Activated CD4-positive, alpha-beta T cell treated with anti-CD3 and anti-CD28 coated beads, Interleukin-2, amount 10 ng/mL, durations not matched to agents 24 days and 14 days (primary cell): ENCODE measurements at regions of chr11 and their contacts with region 1.

Region 1: GRCh38 chr11:9265211-9266131 is at the start of gene DENND5A:
- DNase-seq: peak; percentile 85
- H3K4me3 Mint-ChIP-seq: peak within 1 kb of the TSS; percentile 84
- H3K27ac Mint-ChIP-seq: peak within 1 kb of the TSS; percentile 89
- H3K4me1 Mint-ChIP-seq: peaks cover 32% of the 10 kb centered on the region
- H3K27me3 Mint-ChIP-seq: peaks cover 29% of the 10 kb centered on the region
- total RNA-seq, gene DENND5A: 59.9 and 60.7 TPM in 2 replicates

Region 2: DNA sequence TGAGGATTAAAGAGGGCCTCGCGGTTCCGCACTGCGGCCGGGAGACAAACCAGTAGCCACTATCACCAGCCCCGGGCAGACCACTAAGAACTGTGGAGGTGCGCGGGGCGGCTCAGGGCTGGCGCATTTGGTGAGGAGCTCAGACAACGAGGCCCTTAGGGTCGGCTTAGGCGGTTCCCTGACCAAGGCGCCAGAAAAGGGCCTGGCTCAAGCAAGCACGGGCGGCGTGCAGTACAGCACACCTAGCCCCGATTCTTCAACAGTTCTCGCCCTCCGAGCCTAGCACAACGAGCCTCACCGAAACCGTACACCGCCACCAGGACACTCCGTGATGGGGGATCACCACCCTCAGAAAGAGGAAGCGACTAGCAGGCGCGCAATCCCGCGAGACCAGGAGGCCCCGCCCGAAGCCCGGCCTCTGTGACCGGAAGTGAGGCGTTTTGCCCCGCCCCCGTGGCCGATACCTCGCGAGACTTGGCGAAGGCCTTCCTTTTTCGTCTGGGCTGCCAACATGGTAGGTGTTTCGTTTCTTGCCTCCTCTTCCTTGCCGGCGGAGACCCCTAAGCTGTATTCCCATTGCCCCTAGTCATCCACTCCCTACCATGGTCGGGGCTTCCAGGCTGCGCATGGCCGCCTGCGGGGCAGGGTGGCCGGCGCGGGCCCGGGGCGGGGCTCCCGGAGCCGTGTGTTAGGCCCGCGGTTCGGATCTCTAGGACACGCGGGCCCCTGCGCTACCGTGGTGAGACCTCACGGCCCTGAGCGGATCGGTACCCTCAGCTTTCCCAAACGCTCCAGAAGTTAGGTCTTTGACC is 583.0 kb before region 1 on chr11 and contains the starts of genes RPL27A and TRIM66:
- intact Hi-C with region 1: loop called (anchors 1 kb)
- DNase-seq: peak; percentile 100
- H3K4me3 Mint-ChIP-seq: peak within 1 kb of the TSS; percentile 97
- H3K27ac Mint-ChIP-seq: peak within 1 kb of the TSS; percentile 95
- H3K4me1 Mint-ChIP-seq: peaks cover 30% of the 10 kb centered on the region
- H3K27me3 Mint-ChIP-seq: no peaks in the 10 kb centered on the region
- total RNA-seq, gene RPL27A: 738 and 745 TPM in 2 replicates
- total RNA-seq, gene TRIM66: 11.9 and 13.4 TPM in 2 replicates

Region 3: GRCh38 chr11:9060700-9061111 is 204.8 kb before region 1 on chr11:
- intact Hi-C with region 1: loop called (anchors 5 kb)
- DNase-seq: peak; percentile 84
- H3K4me3 Mint-ChIP-seq: no peak overlapping the region
- H3K27ac Mint-ChIP-seq: peak overlapping the region; percentile 30
- H3K4me1 Mint-ChIP-seq: peaks cover 14% of the 10 kb centered on the region
- H3K27me3 Mint-ChIP-seq: peaks cover 17% of the 10 kb centered on the region

Region 4: DNA sequence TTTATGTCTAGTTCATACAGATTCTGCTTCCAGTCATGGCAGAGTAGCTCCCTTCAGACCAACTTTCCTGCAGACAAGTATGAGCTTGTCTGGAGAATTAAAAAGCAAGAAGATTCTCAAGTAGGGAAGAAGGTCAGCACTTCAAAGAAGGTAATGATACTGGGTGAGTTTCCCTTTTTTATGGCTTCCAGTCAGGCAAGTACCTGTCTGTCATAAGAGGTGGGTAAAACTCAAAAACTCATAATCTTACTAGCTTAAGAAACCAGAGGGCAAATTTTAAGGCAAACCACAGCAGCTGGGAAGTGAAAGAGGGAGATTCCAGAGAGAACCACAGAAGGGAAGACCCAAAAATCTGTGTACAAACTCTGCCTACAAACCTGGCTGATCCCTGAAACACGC is 54.5 kb before region 1 on chr11:
- intact Hi-C with region 1: loop called (anchors 1 kb)
- DNase-seq: peak; percentile 63
- H3K4me3 Mint-ChIP-seq: peak overlapping the region; percentile 53
- H3K27ac Mint-ChIP-seq: peak overlapping the region; percentile 76
- H3K4me1 Mint-ChIP-seq: peaks cover 54% of the 10 kb centered on the region
- H3K27me3 Mint-ChIP-seq: no peaks in the 10 kb centered on the region

Region 5: GRCh38 chr11:9280655-9281301 is 15.3 kb after region 1 on chr11:
- intact Hi-C with region 1: loop called (anchors 2 kb)
- DNase-seq: peak; percentile 92
- H3K4me3 Mint-ChIP-seq: peak overlapping the region; percentile 70
- H3K27ac Mint-ChIP-seq: peak overlapping the region; percentile 31
- H3K4me1 Mint-ChIP-seq: peaks cover 12% of the 10 kb centered on the region
- H3K27me3 Mint-ChIP-seq: no peaks in the 10 kb centered on the region

Region 6: GRCh38 chr11:9384535-9385303 is 119.2 kb after region 1 on chr11 and contains the start of gene IPO7:
- intact Hi-C with region 1: loop called (anchors 1 kb)
- DNase-seq: peak; percentile 97
- H3K4me3 Mint-ChIP-seq: peak within 1 kb of the TSS; percentile 95
- H3K27ac Mint-ChIP-seq: peak within 1 kb of the TSS; percentile 94
- H3K4me1 Mint-ChIP-seq: peaks cover 21% of the 10 kb centered on the region
- H3K27me3 Mint-ChIP-seq: no peaks in the 10 kb centered on the region
- total RNA-seq, gene IPO7: 177 and 200 TPM in 2 replicates

Region 7: DNA sequence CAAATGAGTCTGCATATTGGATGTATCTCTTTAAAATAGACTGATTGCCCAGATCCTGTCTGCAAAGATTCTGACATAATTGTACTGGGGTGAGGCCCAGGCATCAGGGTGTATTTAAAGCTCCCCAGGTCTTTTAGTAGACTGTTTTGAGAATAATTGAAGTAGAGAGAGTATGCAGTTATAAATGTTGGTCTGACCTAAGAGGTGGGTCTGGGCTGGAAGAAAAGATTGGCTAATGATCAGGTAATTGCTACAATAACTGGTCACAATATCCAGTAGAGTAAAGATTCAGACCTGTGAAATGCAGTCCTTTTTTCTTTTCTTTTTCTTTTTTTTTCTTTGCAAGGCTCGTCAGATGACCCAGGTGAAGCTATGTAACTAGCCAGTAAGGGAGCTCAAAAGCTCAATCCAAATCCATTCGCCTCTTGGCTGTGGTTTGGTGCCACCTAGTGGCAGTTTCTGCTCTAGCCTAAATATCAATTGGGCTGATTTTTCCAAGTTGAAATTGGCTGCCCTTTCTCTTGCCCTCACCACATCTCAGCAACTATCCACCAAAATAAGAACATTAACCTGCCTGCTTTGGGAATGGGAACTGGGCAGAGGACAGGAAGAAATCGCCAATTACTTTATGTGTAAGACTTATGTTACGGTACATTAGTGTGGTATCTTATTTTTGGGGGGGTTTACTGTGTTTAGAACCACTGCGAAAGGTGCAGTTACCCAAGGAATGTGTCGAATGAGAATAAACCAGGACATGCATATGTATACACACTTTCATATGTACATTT is 241.2 kb after region 1 on chr11:
- intact Hi-C with region 1: loop called (anchors 5 kb)
- DNase-seq: peak; percentile 93
- H3K4me3 Mint-ChIP-seq: no peak overlapping the region
- H3K27ac Mint-ChIP-seq: no peak overlapping the region
- H3K4me1 Mint-ChIP-seq: peaks cover 13% of the 10 kb centered on the region
- H3K27me3 Mint-ChIP-seq: no peaks in the 10 kb centered on the region

Region 8: GRCh38 chr11:9815486-9816136 is 550.1 kb after region 1 on chr11:
- intact Hi-C with region 1: no loop called
- DNase-seq: no peak
- H3K4me3 Mint-ChIP-seq: no peak overlapping the region
- H3K27ac Mint-ChIP-seq: no peak overlapping the region
- H3K4me1 Mint-ChIP-seq: no peaks in the 10 kb centered on the region
- H3K27me3 Mint-ChIP-seq: no peaks in the 10 kb centered on the region